Activated CD4-positive, alpha-beta memory T cell treated with anti-CD3 and anti-CD28 coated beads for 36 hours (primary cell): ENCODE measurements at regions of chr11 and their contacts with region 1.

Region 1: GRCh38 chr11:124800226-124800929 is at the start of gene MSANTD2:
- DNase-seq: peak; percentile 87
- H3K4me3 Mint-ChIP-seq: peak within 1 kb of the TSS; percentile 89
- H3K27ac Mint-ChIP-seq: peak within 1 kb of the TSS; percentile 94
- H3K4me1 Mint-ChIP-seq: peaks cover 29% of the 10 kb centered on the region
- H3K27me3 Mint-ChIP-seq: no peaks in the 10 kb centered on the region
- total RNA-seq, gene MSANTD2: 6.1 to 6.4 TPM

Region 2: DNA sequence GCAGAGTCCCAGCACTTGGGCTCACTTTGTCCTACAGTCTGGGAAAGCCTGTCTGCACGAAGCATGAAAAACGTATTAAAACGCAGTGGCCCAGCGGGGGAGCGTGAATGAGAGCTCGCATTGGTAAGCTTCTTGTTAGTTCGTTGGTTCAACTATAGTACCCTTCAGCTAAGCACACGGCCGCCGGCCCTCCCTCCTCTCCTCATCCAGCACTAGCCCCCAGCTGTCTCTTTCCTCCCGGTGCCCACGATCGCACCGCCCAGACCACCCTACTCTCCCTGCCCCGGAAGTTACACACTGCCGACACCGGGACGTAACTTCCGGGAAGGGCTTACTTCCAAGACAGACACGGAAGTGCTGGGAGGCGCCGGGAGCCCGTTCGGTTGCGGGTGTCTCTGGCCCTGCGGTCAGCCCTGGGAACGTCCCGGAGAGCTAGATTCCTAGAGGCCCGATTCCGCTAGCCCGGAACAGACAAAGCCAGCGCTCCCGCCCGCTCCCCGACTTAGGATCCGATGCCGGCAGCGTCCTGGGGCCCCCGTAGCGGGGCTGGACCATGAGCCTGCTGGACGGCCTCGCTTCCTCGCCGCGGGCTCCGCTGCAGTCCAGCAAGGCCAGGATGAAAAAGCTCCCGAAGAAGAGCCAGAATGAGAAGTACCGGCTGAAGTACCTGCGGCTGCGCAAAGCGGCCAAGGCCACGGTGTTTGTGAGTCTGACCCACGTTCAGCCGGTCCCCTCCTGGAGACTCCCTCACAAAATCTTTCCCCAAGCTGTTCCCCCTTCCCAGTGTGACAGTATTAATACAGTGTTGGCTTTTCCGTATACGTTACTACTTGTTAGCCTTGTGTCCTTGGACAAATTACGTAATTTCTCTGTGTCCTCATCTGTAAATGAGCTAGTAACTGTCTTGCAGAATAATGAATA is 177.6 kb before region 1 on chr11 and contains the start of gene TBRG1:
- CTCF ChIA-PET with region 1: interaction called, 3 read pairs
- POLR2A ChIA-PET with region 1: interaction called, 16 read pairs
- intact Hi-C with region 1: loop called (anchors 5 kb)
- DNase-seq: peak; percentile 87
- H3K4me3 Mint-ChIP-seq: peak within 1 kb of the TSS; percentile 85
- H3K27ac Mint-ChIP-seq: peak within 1 kb of the TSS; percentile 93
- H3K4me1 Mint-ChIP-seq: peaks cover 28% of the 10 kb centered on the region
- H3K27me3 Mint-ChIP-seq: peaks cover 2% of the 10 kb centered on the region
- total RNA-seq, gene TBRG1: 33.5 to 34.5 TPM

Region 3: DNA sequence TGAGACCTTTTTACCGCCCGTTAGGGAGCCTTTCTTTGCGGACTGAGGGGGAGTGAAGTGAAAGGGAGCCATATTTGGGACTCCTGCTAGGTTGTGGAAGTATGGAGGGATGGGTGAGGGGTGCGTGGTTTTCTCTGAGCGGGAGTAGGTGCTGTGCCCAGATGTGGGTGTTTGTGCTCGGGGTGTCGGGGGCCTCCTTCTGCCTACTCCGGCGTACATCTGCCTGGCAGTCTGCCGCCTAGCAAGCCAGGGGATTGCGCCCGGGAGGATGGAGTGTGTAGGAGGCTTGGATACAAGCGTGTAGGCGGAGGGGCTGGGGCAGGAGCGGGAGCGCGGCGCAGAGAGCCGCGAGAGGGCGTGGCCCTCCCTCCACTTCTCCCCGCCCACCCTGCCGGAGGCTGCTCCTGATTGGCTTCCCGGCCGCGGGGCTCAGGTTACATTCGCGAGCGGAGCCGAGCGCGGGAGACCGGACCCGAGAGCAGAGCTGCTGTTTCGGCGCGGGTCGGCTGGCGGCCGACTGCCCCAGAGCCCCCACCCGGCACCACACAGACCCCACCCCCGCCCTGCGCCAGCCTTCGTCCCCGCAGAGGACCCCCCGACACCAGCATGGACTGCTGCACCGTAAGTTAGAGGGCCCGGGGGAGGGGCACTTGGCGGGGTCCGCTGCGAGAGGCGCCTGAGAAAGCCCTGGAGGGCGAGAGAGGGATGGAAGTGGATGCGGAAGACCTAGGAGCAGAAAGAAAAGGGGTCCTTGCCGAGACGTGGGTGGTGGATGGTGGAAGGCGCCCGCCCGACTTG is 60.7 kb before region 1 on chr11 and contains the start of gene NRGN:
- CTCF ChIA-PET with region 1: interaction called, 18 read pairs
- POLR2A ChIA-PET with region 1: interaction called, 4 read pairs
- intact Hi-C with region 1: loop called (anchors 1 kb)
- DNase-seq: peak; percentile 91
- H3K4me3 Mint-ChIP-seq: peak within 1 kb of the TSS; percentile 79
- H3K27ac Mint-ChIP-seq: no peak within 1 kb of the TSS
- H3K4me1 Mint-ChIP-seq: peaks cover 10% of the 10 kb centered on the region
- H3K27me3 Mint-ChIP-seq: peaks cover 3% of the 10 kb centered on the region
- total RNA-seq, gene NRGN: 15.3 to 17.0 TPM